Activated T-helper 2 cell treated with anti-CD3 and anti-CD28 coated beads, Interferon-gamma antibody, Interleukin-2, Interleukin-4, amounts not matched to agents 10 μg/mL and 5 μg/mL and 100 μg/mL, durations not matched to agents 14 hours and 24 hours and 36 hours (primary cell): ENCODE measurements at regions of chr4 and their contacts with region 1.

Region 1: GRCh38 chr4:39044364-39044955 is 12.3 kb upstream of the TMEM156 start:
- DNase-seq: peak; percentile 89
- H3K4me3 Mint-ChIP-seq: peak overlapping the region; percentile 84
- H3K27ac Mint-ChIP-seq: peak overlapping the region; percentile 85
- H3K4me1 Mint-ChIP-seq: peaks cover 51% of the 10 kb centered on the region
- H3K27me3 Mint-ChIP-seq: no peaks in the 10 kb centered on the region

Region 2: GRCh38 chr4:38939165-38939564 is 105.3 kb before region 1 on chr4:
- intact Hi-C with region 1: loop called (anchors 1 kb)
- DNase-seq: no peak
- H3K4me3 Mint-ChIP-seq: peak overlapping the region; percentile 5
- H3K27ac Mint-ChIP-seq: peak overlapping the region; percentile 71
- H3K4me1 Mint-ChIP-seq: peaks cover 44% of the 10 kb centered on the region
- H3K27me3 Mint-ChIP-seq: no peaks in the 10 kb centered on the region

Region 3: GRCh38 chr4:38958453-38959190 is 85.8 kb before region 1 on chr4:
- intact Hi-C with region 1: loop called (anchors 1 kb)
- DNase-seq: no peak
- H3K4me3 Mint-ChIP-seq: no peak overlapping the region
- H3K27ac Mint-ChIP-seq: peak overlapping the region; percentile 94
- H3K4me1 Mint-ChIP-seq: peaks cover 35% of the 10 kb centered on the region
- H3K27me3 Mint-ChIP-seq: no peaks in the 10 kb centered on the region

Region 4: DNA sequence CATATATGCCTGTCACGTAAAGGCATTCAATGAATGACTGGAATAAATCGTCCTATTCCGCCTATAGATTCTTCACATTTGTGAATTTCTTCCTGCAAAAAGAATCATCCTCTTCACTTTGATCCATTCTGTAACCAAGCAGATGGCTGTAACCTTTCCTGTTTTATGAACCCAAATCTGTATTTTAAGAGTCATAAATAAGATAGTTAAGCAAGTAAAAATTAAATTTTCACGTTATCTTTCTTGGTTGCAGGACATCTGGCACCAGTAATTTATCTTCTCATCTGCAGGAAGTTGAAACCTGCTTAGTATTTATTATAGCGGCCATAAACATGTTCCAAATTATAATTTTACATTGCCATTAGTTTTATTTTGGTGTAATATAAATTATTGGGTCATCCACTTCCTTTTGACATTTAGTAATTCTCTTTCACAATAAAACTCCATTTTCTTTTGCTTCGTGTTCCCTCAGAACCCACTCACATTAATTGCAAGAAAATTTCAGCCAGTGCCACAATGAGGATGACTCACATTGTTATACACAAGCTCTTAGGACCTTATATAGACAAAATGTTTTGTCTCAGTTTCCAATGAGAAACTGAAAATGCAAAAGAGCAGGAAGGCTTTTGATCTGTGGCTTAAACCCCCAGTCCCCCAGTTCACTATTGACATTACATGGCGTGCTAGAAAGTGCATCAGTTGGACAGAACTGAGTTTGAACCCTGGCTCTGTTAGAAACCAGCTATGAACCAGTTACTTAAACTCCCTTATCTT is 63.4 kb before region 1 on chr4:
- intact Hi-C with region 1: loop called (anchors 2 kb)
- DNase-seq: no peak
- H3K4me3 Mint-ChIP-seq: peak overlapping the region; percentile 31
- H3K27ac Mint-ChIP-seq: peak overlapping the region; percentile 81
- H3K4me1 Mint-ChIP-seq: peaks cover 53% of the 10 kb centered on the region
- H3K27me3 Mint-ChIP-seq: no peaks in the 10 kb centered on the region

Region 5: GRCh38 chr4:39032218-39033085 is 12.0 kb before region 1 on chr4 and contains the start of gene TMEM156:
- intact Hi-C with region 1: loop called (anchors 1 kb)
- DNase-seq: no peak
- H3K4me3 Mint-ChIP-seq: peak within 1 kb of the TSS; percentile 86
- H3K27ac Mint-ChIP-seq: peak within 1 kb of the TSS; percentile 80
- H3K4me1 Mint-ChIP-seq: peaks cover 45% of the 10 kb centered on the region
- H3K27me3 Mint-ChIP-seq: no peaks in the 10 kb centered on the region
- total RNA-seq, gene TMEM156: 17.6 and 17.8 TPM in 2 replicates

Region 6: GRCh38 chr4:39134683-39135319 is 90.3 kb after region 1 on chr4:
- intact Hi-C with region 1: loop called (anchors 5 kb)
- DNase-seq: no peak
- H3K4me3 Mint-ChIP-seq: no peak overlapping the region
- H3K27ac Mint-ChIP-seq: no peak overlapping the region
- H3K4me1 Mint-ChIP-seq: peaks cover 5% of the 10 kb centered on the region
- H3K27me3 Mint-ChIP-seq: no peaks in the 10 kb centered on the region

Region 7: GRCh38 chr4:39181905-39182638 is 137.6 kb after region 1 on chr4 and contains the start of gene WDR19:
- intact Hi-C with region 1: loop called (anchors 2 kb)
- DNase-seq: peak; percentile 99
- H3K4me3 Mint-ChIP-seq: no peak within 1 kb of the TSS
- H3K27ac Mint-ChIP-seq: no peak within 1 kb of the TSS
- H3K4me1 Mint-ChIP-seq: peaks cover 9% of the 10 kb centered on the region
- H3K27me3 Mint-ChIP-seq: peaks cover 7% of the 10 kb centered on the region
- total RNA-seq, gene WDR19: 8.9 and 10.5 TPM in 2 replicates